Activated T-helper 2 cell treated with anti-CD3 and anti-CD28 coated beads, Interferon-gamma antibody, Interleukin-2, Interleukin-4, amounts not matched to agents 10 μg/mL and 5 μg/mL and 100 μg/mL, durations not matched to agents 14 hours and 24 hours and 36 hours (primary cell): ENCODE measurements at regions of chr13 and their contacts with region 1.

Region 1: GRCh38 chr13:79194272-79194671 is 211.8 kb downstream of the RBM26 start:
- DNase-seq: peak; percentile 63
- H3K4me3 Mint-ChIP-seq: no peak overlapping the region
- H3K27ac Mint-ChIP-seq: no peak overlapping the region
- H3K4me1 Mint-ChIP-seq: peaks cover 51% of the 10 kb centered on the region
- H3K27me3 Mint-ChIP-seq: peaks cover 15% of the 10 kb centered on the region

Region 2: GRCh38 chr13:79231891-79232290 is 37.6 kb after region 1 on chr13:
- intact Hi-C with region 1: loop called (anchors 5 kb)
- DNase-seq: no peak
- H3K4me3 Mint-ChIP-seq: no peak overlapping the region
- H3K27ac Mint-ChIP-seq: no peak overlapping the region
- H3K4me1 Mint-ChIP-seq: no peaks in the 10 kb centered on the region
- H3K27me3 Mint-ChIP-seq: peaks cover 8% of the 10 kb centered on the region

Region 3: DNA sequence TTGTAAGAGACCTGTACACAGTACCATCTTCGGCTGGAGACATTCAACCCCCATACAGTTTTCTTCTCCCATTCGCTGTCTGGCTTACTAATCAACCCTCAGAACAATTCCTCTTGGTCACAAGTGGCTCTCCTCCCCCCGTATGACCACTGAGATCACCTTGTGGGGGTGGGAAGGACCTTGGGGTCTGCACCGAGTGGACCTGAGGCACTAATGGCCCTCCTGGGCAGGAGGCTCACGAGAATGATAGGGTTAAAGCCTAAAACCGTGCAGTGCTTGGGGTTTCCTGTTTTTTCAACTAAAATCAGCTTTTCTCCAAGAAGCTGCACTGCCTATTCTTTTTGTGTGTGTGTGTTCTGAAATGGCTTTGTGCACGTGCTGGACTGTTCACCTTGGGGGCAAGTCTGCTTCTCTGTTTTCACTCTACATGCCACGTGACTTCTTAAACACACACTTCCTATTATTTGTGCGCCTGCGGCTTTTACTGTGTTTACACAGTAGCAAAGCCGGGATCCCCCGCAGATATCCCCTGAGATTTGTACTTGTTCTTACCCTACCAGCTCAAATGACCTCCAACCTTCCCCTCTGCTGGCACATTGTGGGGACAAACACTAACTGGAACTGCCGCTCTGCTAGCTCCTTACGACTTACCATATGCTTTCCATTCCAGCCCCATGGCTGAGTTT is 199.4 kb after region 1 on chr13:
- intact Hi-C with region 1: loop called (anchors 1 kb)
- DNase-seq: peak; percentile 32
- H3K4me3 Mint-ChIP-seq: peak overlapping the region; percentile 70
- H3K27ac Mint-ChIP-seq: peak overlapping the region; percentile 74
- H3K4me1 Mint-ChIP-seq: peaks cover 53% of the 10 kb centered on the region
- H3K27me3 Mint-ChIP-seq: no peaks in the 10 kb centered on the region